ENCODE measurements at regions of chr22 and their contacts with region 1.

Region 1: DNA sequence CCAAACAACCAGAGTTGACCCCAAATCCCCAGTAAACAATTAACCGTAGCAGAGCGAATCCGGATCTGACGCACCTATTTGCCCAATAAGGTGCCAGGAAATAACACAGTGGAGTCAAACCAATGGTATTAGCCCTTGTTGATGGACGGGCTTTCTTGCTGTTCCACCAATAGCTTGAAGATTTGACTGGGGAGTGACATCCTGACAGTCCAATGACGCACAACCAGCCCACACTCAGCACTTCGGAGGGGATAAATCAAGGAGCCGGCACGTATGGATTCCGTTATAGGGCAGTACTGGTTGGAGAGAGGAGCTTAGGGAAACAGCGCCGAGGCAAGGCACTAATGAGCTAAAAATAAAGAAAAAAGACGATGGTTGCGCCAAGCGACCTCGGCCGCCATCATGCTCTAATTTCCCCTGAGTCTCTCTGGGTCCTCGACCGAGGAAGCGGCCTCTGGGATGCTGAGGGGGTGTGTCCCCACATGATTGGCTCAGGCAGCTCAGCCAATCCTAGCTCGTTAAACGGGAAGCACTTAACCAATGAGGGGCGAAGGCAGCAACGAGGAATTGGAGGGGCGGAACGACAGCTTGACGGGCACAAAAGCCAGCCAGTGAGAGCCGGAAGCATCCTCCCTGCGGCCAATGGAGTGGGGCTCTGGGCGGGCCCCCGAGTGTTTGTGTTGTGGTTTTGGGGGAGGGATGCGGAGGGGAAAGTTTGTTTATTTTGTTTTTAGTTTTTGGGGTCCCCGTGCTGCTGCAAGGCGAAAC is 49.5 kb downstream of the FAM83F start:
- DNase-seq: peak; percentile 99
- ATAC-seq: peak; percentile 90
- H3K4me3 Mint-ChIP-seq: peak overlapping the region; percentile 89
- H3K27ac Mint-ChIP-seq: peak overlapping the region; percentile 99
- H3K4me1 Mint-ChIP-seq: peaks cover 42% of the 10 kb centered on the region
- H3K27me3 Mint-ChIP-seq: peaks cover 8% of the 10 kb centered on the region

Region 2: GRCh38 chr22:39520054-39520891 is 524.0 kb before region 1 on chr22 and contains the start of gene ATF4:
- CTCF ChIA-PET with region 1: no interaction called
- POLR2A ChIA-PET with region 1: interaction called, 11 read pairs
- DNase-seq: peak; percentile 98
- ATAC-seq: peak; percentile 89
- H3K4me3 Mint-ChIP-seq: peak within 1 kb of the TSS; percentile 90
- H3K27ac Mint-ChIP-seq: peak within 1 kb of the TSS; percentile 98
- H3K4me1 Mint-ChIP-seq: peaks cover 61% of the 10 kb centered on the region
- H3K27me3 Mint-ChIP-seq: no peaks in the 10 kb centered on the region
- total RNA-seq, gene ATF4: 412 to 426 TPM

Region 3: GRCh38 chr22:39917776-39918495 is 126.3 kb before region 1 on chr22:
- CTCF ChIA-PET with region 1: interaction called, 3 read pairs
- POLR2A ChIA-PET with region 1: interaction called, 11 read pairs
- DNase-seq: no peak
- ATAC-seq: no peak
- H3K4me3 Mint-ChIP-seq: peak overlapping the region; percentile 73
- H3K27ac Mint-ChIP-seq: peak overlapping the region; percentile 91
- H3K4me1 Mint-ChIP-seq: peaks cover 85% of the 10 kb centered on the region
- H3K27me3 Mint-ChIP-seq: no peaks in the 10 kb centered on the region

Region 4: DNA sequence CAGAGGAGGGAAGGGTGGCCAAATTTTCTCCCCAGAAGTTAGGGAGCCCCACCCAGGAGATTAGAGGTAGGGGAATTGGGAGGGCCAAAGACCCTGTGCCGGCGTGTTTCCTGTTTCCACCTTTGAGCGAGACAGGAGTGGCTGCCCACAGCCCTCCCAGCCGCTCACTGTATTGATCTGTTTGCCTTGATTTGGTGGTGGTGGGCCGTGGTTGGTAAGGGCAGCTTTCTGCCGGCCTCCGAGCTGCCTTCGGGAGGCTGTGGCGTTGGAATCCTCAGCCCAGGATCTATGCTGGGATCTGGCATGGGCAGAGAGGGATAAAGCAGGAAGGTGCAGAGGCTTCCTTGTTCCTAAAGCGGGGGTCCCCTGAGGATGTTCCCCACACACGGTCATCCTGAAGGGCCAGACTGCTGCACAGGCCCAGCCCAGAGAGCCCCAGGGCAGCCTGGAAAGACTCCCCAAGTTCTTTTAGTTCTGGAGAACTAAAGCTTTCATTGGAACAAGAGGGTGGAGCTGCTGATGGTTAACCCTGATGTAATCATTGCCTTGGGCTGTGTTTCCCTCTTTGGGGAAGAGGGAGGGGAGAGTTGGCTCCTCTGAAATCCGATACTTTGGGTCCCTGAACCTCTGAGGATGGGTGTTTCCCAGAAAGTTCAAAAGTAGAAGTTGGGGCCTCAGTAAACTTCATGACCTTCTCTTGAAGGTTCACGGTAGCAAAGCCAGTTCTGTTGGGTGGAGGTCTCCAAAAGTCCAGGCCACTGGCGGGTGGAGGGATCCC is 42.3 kb before region 1 on chr22:
- CTCF ChIA-PET with region 1: no interaction called
- POLR2A ChIA-PET with region 1: no interaction called
- DNase-seq: no peak
- ATAC-seq: no peak
- H3K4me3 Mint-ChIP-seq: no peak overlapping the region
- H3K27ac Mint-ChIP-seq: no peak overlapping the region
- H3K4me1 Mint-ChIP-seq: no peaks in the 10 kb centered on the region
- H3K27me3 Mint-ChIP-seq: peaks cover 20% of the 10 kb centered on the region

Region 5: DNA sequence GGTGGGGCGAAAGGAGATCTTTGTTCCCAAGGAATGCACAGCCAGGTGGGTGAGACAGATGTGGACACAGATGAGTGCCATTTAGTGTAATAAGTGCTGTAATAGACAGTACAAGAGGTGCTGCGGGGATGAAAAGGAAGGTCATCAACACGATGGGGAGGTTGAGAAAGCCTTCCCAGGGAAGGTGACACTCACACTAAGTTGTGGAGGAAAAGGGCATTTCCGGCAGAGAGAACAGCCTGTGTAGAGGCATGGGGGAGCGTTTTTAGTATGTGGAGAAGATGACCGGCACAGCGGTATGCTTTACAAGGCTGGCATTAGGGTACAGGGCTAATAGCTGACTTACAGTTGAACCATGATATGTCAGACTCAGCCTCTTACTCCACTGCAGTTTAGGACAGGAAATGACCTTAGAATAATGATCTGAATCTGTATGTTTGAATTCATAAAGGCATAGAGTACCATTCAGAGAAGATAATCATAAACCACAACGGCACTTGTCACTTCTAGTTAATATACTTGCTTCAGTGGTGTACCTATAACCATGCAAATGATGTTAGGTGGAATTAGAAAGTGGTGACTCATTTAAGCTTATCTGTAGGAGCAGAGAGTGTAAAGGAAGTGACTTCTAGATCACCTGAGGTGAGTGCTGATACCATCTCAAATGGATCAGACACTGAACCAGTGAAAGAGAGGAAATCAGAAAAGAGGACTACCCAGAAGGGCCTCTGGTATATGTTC is 11.0 kb after region 1 on chr22:
- CTCF ChIA-PET with region 1: interaction called, 17 read pairs
- POLR2A ChIA-PET with region 1: interaction called, 57 read pairs
- DNase-seq: peak; percentile 46
- ATAC-seq: peak; percentile 94
- H3K4me3 Mint-ChIP-seq: peak overlapping the region; percentile 55
- H3K27ac Mint-ChIP-seq: peak overlapping the region; percentile 92
- H3K4me1 Mint-ChIP-seq: peaks cover 78% of the 10 kb centered on the region
- H3K27me3 Mint-ChIP-seq: no peaks in the 10 kb centered on the region

Region 6: GRCh38 chr22:40107851-40108378 is 63.6 kb after region 1 on chr22:
- CTCF ChIA-PET with region 1: no interaction called
- POLR2A ChIA-PET with region 1: interaction called, 11 read pairs
- DNase-seq: peak; percentile 59
- ATAC-seq: peak; percentile 92
- H3K4me3 Mint-ChIP-seq: peak overlapping the region; percentile 78
- H3K27ac Mint-ChIP-seq: peak overlapping the region; percentile 93
- H3K4me1 Mint-ChIP-seq: peaks cover 58% of the 10 kb centered on the region
- H3K27me3 Mint-ChIP-seq: no peaks in the 10 kb centered on the region

Region 7: GRCh38 chr22:40128989-40129388 is 84.7 kb after region 1 on chr22:
- CTCF ChIA-PET with region 1: interaction called, 3 read pairs
- POLR2A ChIA-PET with region 1: interaction called, 10 read pairs
- DNase-seq: peak; percentile 75
- ATAC-seq: peak; percentile 94
- H3K4me3 Mint-ChIP-seq: peak overlapping the region; percentile 59
- H3K27ac Mint-ChIP-seq: peak overlapping the region; percentile 90
- H3K4me1 Mint-ChIP-seq: peaks cover 60% of the 10 kb centered on the region
- H3K27me3 Mint-ChIP-seq: no peaks in the 10 kb centered on the region

Region 8: DNA sequence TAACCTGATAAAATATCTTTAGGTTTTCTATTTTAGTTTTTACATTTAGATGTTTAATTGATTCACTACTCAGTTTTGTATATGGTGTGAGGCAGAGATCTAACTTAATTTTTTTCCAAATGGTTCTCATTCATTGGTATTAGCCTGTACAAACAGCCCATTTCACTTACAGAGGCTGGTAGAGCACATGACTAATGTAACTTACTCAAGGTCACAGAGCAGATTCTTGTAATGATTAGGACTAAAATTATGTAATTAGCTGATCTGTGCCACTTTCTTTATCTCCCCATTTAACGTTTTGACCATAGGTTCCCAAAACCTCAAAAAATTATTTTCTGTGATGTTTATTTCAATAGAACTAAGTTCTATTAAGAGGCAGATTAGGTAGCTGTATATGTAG is 116.9 kb after region 1 on chr22:
- CTCF ChIA-PET with region 1: no interaction called
- POLR2A ChIA-PET with region 1: no interaction called
- DNase-seq: no peak
- ATAC-seq: no peak
- H3K4me3 Mint-ChIP-seq: no peak overlapping the region
- H3K27ac Mint-ChIP-seq: no peak overlapping the region
- H3K4me1 Mint-ChIP-seq: no peaks in the 10 kb centered on the region
- H3K27me3 Mint-ChIP-seq: no peaks in the 10 kb centered on the region

Region 9: GRCh38 chr22:40177738-40178416 is 133.6 kb after region 1 on chr22 and contains the start of gene TNRC6B:
- CTCF ChIA-PET with region 1: interaction called, 7 read pairs
- POLR2A ChIA-PET with region 1: interaction called, 68 read pairs
- DNase-seq: peak; percentile 91
- ATAC-seq: peak; percentile 80
- H3K4me3 Mint-ChIP-seq: peak within 1 kb of the TSS; percentile 94
- H3K27ac Mint-ChIP-seq: peak within 1 kb of the TSS; percentile 91
- H3K4me1 Mint-ChIP-seq: peaks cover 48% of the 10 kb centered on the region
- H3K27me3 Mint-ChIP-seq: no peaks in the 10 kb centered on the region
- total RNA-seq, gene TNRC6B: 62.9 to 63.3 TPM